Activated B cell treated with CpG ODN at 0.5 μM for 24 hours (primary cell): ENCODE measurements at regions of chr2 and their contacts with region 1.

Region 1: DNA sequence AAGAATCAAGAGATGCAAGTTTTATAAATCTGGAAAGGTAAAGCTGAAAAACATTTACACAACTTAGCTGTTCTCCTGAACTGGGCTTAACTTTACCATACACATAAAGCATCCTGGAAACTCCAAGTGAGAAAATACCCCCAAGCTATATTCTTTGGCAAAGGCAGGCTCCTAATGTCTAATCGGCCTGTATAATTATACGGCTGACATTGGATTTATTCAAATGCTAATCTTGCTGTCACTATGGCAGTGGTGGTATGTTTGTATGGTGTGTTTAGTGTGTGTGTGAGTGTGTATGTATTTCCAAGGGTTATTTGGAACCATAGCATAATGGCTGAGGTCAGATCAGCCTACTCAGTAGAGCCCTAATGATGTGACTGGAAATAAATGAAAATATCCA is 1031.8 kb upstream of the ZEB2 start:
- DNase-seq: no peak
- ATAC-seq: no peak
- H3K4me3 Mint-ChIP-seq: no peak overlapping the region
- H3K27ac Mint-ChIP-seq: no peak overlapping the region
- H3K4me1 Mint-ChIP-seq: no peaks in the 10 kb centered on the region
- H3K27me3 Mint-ChIP-seq: no peaks in the 10 kb centered on the region
- CTCF ChIP-seq: no peak

Region 2: GRCh38 chr2:145563741-145564615 is 12.3 kb after region 1 on chr2:
- CTCF ChIA-PET with region 1: no interaction called
- POLR2A ChIA-PET with region 1: no interaction called
- intact Hi-C with region 1: loop called (anchors 1 kb)
- DNase-seq: no peak
- ATAC-seq: no peak
- H3K4me3 Mint-ChIP-seq: no peak overlapping the region
- H3K27ac Mint-ChIP-seq: no peak overlapping the region
- H3K4me1 Mint-ChIP-seq: peaks cover 6% of the 10 kb centered on the region
- H3K27me3 Mint-ChIP-seq: no peaks in the 10 kb centered on the region
- CTCF ChIP-seq: no peak